ENCODE measurements at regions of chr19 and their contacts with region 1.

Region 1: DNA sequence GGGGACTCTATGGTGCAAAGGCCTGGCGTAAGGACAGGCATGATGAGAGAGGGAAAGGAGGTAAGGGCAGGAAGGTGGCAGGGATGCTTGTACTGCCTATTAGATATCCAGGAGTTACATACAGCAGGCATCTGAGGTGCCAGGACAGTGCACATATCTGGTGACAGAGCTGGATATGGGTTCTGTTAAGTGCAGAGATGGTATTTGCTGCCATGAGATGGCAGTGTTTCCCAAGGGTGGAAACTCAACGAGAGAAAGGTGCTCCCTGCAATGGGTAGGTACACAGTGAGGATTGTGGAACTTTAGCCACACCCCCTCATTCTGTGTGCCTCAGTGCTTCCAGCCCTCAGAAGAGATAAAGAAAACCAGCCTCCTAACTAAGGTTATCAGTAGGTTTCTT is 6.9 kb downstream of the TNPO2 start:
- DNase-seq: no peak
- ATAC-seq: no peak
- H3K4me3 ChIP-seq: no peak overlapping the region
- H3K27ac ChIP-seq: no peak overlapping the region
- H3K4me1 ChIP-seq: peaks cover 4 to 27% (median 16%) of the 10 kb centered on the region in 12 donors
- H3K27me3 ChIP-seq: no peaks in the 10 kb centered on the region
- CTCF ChIP-seq: peak in 7 of 12 donors; percentile 8 to 33 (median 25)
- POLR2A ChIP-seq: no peak

Region 2: GRCh38 chr19:12400633-12401502 is 316.0 kb before region 1 on chr19 and contains the start of gene ZNF799:
- intact Hi-C with region 1: no loop called
- DNase-seq: peak; percentile 98 to 99 (median 98)
- ATAC-seq: peak; percentile 99 to 100 (median 100)
- H3K4me3 ChIP-seq: peak within 1 kb of the TSS; percentile 67 to 94 (median 84)
- H3K27ac ChIP-seq: peak within 1 kb of the TSS; percentile 19 to 93 (median 88)
- H3K4me1 ChIP-seq: peaks cover 0 to 13% (median 5%) of the 10 kb centered on the region in 12 donors
- H3K27me3 ChIP-seq: no peaks in the 10 kb centered on the region
- CTCF ChIP-seq: peak in 4 of 12 donors; percentile 16 to 34 (median 30)
- POLR2A ChIP-seq: peak in 1 of 2 donors; percentile 62
- total RNA-seq, gene ZNF799: 1.5 to 3.9 (median 2.1) TPM

Region 3: DNA sequence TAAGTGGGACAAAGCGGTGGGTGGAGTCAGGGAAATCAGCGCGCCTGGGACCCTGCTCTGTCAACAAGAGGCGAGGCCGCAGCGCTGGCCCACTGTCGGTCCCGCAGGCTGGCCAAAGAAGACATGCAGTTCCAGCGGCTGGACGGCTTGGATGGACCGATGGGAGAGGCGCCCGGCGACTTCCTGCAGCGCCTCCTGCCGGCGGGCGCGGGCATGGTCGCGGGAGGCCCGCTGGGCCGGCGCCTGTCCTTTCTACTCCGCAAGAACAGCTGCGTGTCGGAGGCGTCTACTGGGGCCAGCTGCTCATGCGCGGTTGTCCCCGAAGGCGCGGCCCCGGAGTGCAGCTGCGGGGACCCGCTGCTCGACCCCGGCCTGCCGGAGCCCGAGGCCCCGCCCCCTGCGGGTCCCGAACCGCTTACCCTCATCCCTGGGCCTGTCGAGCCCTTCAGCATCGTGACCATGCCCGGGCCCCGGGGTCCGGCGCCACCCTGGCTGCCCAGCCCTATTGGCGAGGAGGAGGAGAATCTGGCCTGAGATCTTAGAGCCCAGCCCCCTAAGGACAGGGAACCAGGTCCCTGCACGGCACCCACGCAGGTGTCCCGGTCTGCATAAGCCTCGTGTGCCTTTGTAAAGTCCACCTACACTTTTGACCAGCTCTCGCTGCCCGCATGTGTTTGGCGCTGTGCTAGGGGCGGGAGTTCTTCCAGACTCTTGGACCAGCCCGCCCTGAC is 40.8 kb after region 1 on chr19:
- intact Hi-C with region 1: loop called in 2 of 10 experiments (anchors 5 kb)
- DNase-seq: peak; percentile 66 to 85 (median 76)
- ATAC-seq: peak; percentile 33 to 83 (median 76)
- H3K4me3 ChIP-seq: peak overlapping the region in 9 of 12 donors; percentile 16 to 53 (median 40)
- H3K27ac ChIP-seq: peak overlapping the region in 9 of 12 donors; percentile 3 to 72 (median 48)
- H3K4me1 ChIP-seq: peaks cover 0 to 24% (median 15%) of the 10 kb centered on the region in 12 donors
- H3K27me3 ChIP-seq: peaks cover 0 to 4% (median 0%) of the 10 kb centered on the region in 9 donors
- CTCF ChIP-seq: peak; percentile 78 to 98 (median 92)
- POLR2A ChIP-seq: no peak

Region 4: GRCh38 chr19:12840091-12841079 is 123.5 kb after region 1 on chr19:
- intact Hi-C with region 1: loop called in 2 of 10 experiments (anchors 5 kb)
- DNase-seq: peak in 1 of 5 donors; percentile 42
- ATAC-seq: peak in 3 of 4 donors; percentile 25 to 49 (median 29)
- H3K4me3 ChIP-seq: peak overlapping the region in 7 of 12 donors; percentile 4 to 35 (median 16)
- H3K27ac ChIP-seq: no peak overlapping the region
- H3K4me1 ChIP-seq: peaks cover 0 to 19% (median 4%) of the 10 kb centered on the region in 12 donors
- H3K27me3 ChIP-seq: peaks cover 29 to 99% (median 84%) of the 10 kb centered on the region in 9 donors
- CTCF ChIP-seq: no peak
- POLR2A ChIP-seq: no peak